ENCODE measurements at regions of chr17 and their contacts with region 1.

Region 1: GRCh38 chr17:47915776-47916398 is 19.9 kb downstream of the SP2 start:
- DNase-seq: peak; percentile 65
- ATAC-seq: peak; percentile 74

Region 2: DNA sequence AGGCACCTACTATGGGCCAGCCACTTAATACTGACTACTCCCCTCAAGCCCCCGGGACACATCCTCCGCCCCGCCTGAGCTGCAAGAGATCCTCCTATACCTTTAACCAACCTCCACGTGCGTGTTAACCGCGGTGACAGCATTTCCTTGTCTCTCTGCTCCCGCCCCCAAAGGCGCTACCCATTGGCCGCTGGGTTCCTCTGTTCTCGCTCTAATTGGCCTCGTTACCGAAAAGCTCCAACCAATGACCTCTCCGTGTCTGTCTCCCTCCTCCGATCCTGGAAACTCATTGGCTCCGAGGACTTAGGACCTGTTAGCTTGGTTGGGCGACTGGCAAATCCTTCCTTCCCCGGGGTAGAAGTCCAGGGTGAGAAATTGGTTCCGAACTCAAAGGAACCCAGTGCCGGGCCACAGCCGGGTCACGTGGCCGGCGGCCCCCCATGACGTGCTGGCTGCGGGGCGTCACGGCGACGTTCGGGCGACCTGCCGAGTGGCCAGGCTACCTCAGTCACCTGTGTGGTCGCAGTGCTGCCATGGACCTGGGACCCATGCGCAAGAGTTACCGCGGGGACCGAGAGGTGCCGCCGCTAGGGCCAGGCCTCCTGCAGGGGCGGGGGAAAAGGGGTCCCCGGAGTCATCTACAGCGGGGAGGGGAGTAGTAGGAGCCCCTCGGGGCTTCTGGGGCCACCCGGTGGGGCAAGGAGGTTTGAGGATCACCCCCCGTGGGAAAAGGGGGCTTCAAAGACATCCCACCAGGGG is 25.5 kb after region 1 on chr17 and contains the start of gene PNPO:
- intact Hi-C with region 1: loop called (anchors 2 kb)
- DNase-seq: peak; percentile 96
- ATAC-seq: peak; percentile 97
- total RNA-seq, gene PNPO: 27.8 TPM